PC-9 (cell line): ENCODE measurements at regions of chr12 and their contacts with region 1.

Region 1: DNA sequence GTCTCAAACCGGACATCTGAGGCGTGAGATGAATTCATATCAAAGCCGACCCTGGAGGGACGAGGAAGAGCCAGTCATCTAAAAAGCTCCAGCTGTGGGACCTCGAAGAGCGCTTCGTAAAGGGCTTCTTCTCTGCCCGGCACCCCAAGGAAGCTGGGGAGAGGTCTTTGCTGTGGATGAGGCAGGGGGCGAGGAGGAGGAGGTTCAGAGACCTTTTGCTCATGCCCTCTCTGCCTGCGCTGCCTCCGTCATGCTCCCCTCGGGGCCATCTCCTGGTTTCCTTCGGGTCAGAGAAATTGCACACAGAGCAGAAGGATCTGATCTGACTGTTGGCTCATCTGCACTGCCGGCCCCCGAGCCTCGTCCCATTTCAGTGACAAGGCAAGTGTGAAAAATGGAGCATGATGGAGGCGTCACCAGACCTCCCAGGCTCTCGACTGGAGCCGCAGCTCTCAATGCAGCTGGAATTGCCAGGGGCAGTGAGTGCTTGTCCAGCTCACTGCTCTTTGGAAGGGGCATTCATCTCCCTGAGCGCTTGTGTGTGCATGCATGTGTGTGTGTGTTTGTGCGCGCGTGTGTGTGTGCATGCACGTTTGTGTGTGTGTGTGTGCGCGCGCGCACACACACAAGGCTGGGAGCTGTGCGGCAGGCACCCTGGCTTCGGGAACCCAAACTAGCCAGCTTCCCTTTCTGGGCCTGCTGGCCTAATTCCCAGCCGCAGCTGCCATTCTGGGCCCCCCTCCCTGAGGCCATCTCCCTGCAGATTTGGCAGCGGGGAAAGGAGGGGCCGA is 9.2 kb downstream of the CABP1 start:
- DNase-seq: no peak
- H3K4me3 ChIP-seq: peak overlapping the region; percentile 53; the same call in 1 of the 2 replicates
- H3K27ac ChIP-seq: no peak overlapping the region
- H3K4me1 ChIP-seq: peaks cover 5% of the 10 kb centered on the region; the same call in 1 of the 2 replicates
- H3K27me3 ChIP-seq: peaks cover 4% of the 10 kb centered on the region
- CTCF ChIP-seq: peak; percentile 49; the same call in 1 of the 2 replicates

Region 2: GRCh38 chr12:120528861-120529525 is 120.6 kb before region 1 on chr12 and contains the start of gene COQ5:
- CTCF ChIA-PET with region 1: interaction called, 20 read pairs
- POLR2A ChIA-PET with region 1: no interaction called
- intact Hi-C with region 1: no loop called
- DNase-seq: peak; percentile 50 to 77
- H3K4me3 ChIP-seq: peak within 1 kb of the TSS; percentile 80
- H3K27ac ChIP-seq: peak within 1 kb of the TSS; percentile 68
- H3K4me1 ChIP-seq: peaks cover 24% of the 10 kb centered on the region
- H3K27me3 ChIP-seq: no peaks in the 10 kb centered on the region
- CTCF ChIP-seq: no peak
- total RNA-seq, gene COQ5: 30.4 and 32.2 TPM in 2 replicates

Region 3: GRCh38 chr12:120693848-120694247 is 44.2 kb after region 1 on chr12:
- CTCF ChIA-PET with region 1: interaction called, 21 read pairs
- POLR2A ChIA-PET with region 1: no interaction called
- intact Hi-C with region 1: no loop called
- DNase-seq: no peak
- H3K4me3 ChIP-seq: no peak overlapping the region
- H3K27ac ChIP-seq: no peak overlapping the region
- H3K4me1 ChIP-seq: peaks cover 16% of the 10 kb centered on the region
- H3K27me3 ChIP-seq: no peaks in the 10 kb centered on the region
- CTCF ChIP-seq: no peak

Region 4: DNA sequence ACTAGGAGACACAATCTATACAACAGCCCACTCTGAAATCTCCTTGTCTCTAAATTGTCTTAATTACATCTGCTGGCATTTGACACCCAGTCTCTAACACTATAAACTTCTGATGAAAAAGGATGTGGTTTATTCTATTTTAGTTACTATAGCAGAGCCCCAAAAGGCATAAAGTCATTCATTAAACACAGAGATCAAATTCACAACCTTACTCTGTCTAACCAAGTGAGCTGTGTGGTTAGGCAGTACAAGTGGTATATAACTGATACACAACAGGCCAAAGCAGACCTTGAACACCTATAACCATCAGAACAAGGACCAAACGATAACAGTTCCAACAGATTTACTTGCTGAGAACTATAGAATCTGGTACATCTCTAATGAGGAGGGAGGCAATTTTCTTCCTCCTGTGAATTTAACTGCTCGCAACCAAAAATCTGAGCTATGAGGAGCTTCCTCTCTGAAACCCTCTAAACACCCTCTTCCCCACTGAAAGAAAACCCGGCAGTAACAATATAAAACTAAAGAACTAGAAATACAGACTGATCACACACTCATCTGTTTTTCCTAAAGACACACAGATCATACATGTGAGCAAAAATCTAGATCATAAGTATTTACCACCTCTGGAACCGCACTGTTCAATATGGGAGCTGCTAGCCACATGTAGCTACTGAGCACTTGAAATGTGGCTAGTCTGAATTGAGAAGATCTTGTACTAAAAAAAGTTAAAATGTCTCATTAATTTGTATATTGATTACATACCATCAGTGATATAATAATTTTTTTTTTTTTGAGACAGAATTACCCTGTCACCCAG is 236.8 kb after region 1 on chr12:
- CTCF ChIA-PET with region 1: no interaction called
- POLR2A ChIA-PET with region 1: interaction called, 12 read pairs
- intact Hi-C with region 1: no loop called
- DNase-seq: no peak
- H3K4me3 ChIP-seq: no peak overlapping the region
- H3K27ac ChIP-seq: no peak overlapping the region
- H3K4me1 ChIP-seq: no peaks in the 10 kb centered on the region
- H3K27me3 ChIP-seq: no peaks in the 10 kb centered on the region
- CTCF ChIP-seq: no peak

Region 5: DNA sequence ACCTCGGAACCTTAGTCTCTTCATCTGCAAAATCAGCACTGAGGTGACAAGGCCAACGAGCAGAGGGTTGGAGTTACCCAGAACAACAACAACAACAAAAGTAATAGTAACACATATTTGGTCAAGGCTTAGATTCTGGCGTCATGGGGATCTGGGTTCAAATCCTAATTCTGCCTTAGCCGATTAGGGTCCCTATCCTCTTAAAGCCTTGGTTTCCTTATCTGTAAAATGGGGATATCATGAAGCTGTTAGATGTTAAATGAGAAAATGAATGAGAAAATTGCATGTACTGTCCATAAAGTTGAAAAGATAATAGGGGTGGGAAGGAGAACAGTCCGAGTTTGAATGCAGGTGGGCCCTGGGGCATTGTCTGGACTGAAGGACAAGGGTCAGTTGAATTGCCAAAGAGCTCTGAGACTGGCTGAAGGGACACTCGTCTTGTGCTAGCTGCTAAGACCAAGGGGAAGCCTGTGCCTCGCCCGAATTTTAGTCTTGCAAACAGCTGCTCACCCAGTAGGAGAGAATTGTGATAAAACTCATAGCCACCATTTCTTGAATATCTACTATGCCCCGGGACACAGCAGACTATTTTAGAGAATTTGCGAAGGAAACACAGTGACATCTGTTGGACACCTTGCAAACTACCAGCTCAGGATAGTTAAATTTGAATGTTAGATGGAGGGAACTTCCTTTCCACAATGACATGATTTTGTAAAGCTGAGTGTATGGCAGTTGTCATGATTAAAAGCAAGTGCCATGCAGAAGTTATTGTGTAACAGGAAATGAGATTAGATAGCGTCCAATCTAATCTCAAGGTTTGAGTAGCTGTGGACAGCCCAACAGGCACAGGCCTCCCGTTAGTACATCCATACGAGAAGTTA is 321.9 kb after region 1 on chr12:
- CTCF ChIA-PET with region 1: interaction called, 5 read pairs
- POLR2A ChIA-PET with region 1: no interaction called
- intact Hi-C with region 1: loop called (anchors 5 kb)
- DNase-seq: peak; percentile 27 to 58
- H3K4me3 ChIP-seq: no peak overlapping the region
- H3K27ac ChIP-seq: no peak overlapping the region
- H3K4me1 ChIP-seq: no peaks in the 10 kb centered on the region
- H3K27me3 ChIP-seq: no peaks in the 10 kb centered on the region
- CTCF ChIP-seq: peak; percentile 77

Region 6: DNA sequence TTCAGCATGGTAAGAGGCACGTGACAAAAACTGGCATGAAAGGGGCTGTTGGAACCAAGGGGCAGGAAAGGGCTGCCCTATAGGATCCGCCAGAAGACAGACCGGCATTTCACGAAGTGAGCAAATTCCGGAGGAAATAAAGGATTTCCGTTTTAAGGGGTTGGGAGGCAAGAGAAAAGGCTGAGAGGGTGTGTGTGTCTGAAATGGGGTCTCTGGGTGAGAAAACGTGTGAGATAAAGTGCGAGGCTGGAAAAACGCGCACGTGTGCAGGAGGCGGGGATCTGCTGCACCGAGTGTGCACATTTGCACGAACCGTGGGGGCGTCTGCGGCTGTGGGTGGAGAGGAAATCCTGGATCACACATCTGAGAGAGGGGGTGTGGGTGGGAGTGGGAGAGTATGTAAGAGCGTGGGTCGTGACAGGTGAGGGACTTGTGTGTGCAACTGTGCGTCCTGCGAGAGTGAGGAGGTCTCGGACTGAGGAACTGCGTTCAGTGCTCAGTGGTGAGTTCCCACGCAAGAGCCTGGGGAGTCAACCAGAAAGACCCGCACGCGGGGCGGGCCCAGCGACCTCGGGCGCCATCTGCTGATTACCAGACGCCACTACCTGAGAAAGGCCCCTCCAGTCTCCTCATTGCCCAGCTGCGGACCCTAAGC is 446.0 kb after region 1 on chr12:
- CTCF ChIA-PET with region 1: no interaction called
- POLR2A ChIA-PET with region 1: no interaction called
- intact Hi-C with region 1: loop called (anchors 5 kb)
- DNase-seq: peak in 1 of 2 experiments; percentile 60
- H3K4me3 ChIP-seq: peak overlapping the region; percentile 50
- H3K27ac ChIP-seq: no peak overlapping the region
- H3K4me1 ChIP-seq: no peaks in the 10 kb centered on the region
- H3K27me3 ChIP-seq: peaks cover 14% of the 10 kb centered on the region; the same call in 1 of the 2 replicates
- CTCF ChIP-seq: peak; percentile 73